GM10248 (cell line): ENCODE measurements at regions of chr6 and their contacts with region 1.

Region 1: DNA sequence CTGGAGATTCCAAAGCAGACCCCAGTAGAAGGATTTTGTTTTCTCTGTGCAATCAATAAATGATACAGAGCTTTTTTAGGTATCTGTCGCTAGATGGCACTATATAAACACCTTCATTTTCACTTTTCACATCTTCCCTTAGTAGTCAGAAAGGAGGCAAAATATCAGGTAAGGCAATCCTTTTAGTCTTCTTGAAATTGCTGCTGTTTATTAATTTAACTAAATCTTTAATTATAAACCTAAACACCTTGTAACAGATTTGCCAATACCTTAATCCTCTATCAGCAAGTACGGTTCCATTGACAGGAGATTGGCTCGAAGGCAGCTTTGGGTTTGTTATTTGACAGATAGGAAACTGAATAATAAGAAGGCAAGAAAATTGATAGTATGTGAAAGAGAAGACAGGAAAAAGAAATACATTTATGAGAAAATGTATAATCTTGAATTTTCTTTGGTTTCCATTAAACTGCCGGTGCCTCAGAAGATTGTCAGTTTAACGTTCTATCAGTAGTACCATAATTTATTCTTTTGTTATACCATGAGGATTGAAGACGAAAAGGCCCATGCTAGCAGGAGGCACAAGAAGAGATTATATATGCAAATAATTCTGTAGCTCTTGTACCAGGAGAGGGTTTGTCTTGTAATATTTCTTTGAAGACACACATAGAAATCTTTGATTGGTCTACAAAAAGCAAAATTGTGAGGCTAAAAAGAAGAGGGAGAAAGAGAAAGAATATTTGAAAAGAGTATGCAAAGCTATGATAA is 23.5 kb upstream of the IBTK start:
- DNase-seq: peak; percentile 52
- CTCF ChIP-seq: peak; percentile 45

Region 2: GRCh38 chr6:81925201-81925600 is 345.9 kb before region 1 on chr6:
- CTCF ChIA-PET with region 1: no interaction called
- POLR2A ChIA-PET with region 1: no interaction called
- DNase-seq: no peak
- CTCF ChIP-seq: no peak

Region 3: DNA sequence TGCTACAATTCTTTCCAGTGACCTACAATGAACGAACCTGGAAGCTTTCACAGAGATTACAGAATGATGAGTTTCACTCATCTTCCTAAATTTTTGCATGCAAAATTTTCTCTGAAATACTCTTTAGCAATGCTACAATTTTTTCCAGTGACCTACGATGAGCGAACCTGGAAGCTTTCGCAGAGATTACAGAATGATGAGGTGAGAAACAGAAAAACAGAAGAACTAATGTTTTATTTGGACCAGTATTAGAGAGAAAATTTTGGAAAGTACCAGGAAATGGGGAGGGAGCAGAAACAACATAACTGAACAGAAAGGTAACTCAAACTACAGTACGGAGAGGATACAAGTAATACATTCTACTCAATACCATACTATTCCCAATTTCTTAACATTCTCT is 98.5 kb before region 1 on chr6:
- CTCF ChIA-PET with region 1: no interaction called
- POLR2A ChIA-PET with region 1: no interaction called
- DNase-seq: no peak
- CTCF ChIP-seq: no peak

Region 4: GRCh38 chr6:82247634-82248232 is 23.3 kb before region 1 on chr6 and contains the start of gene IBTK:
- CTCF ChIA-PET with region 1: interaction called, 12 read pairs
- POLR2A ChIA-PET with region 1: no interaction called
- DNase-seq: peak; percentile 94
- CTCF ChIP-seq: no peak

Region 5: GRCh38 chr6:82257088-82257772 is 13.8 kb before region 1 on chr6:
- CTCF ChIA-PET with region 1: interaction called, 41 read pairs
- POLR2A ChIA-PET with region 1: no interaction called
- DNase-seq: no peak
- CTCF ChIP-seq: no peak

Region 6: DNA sequence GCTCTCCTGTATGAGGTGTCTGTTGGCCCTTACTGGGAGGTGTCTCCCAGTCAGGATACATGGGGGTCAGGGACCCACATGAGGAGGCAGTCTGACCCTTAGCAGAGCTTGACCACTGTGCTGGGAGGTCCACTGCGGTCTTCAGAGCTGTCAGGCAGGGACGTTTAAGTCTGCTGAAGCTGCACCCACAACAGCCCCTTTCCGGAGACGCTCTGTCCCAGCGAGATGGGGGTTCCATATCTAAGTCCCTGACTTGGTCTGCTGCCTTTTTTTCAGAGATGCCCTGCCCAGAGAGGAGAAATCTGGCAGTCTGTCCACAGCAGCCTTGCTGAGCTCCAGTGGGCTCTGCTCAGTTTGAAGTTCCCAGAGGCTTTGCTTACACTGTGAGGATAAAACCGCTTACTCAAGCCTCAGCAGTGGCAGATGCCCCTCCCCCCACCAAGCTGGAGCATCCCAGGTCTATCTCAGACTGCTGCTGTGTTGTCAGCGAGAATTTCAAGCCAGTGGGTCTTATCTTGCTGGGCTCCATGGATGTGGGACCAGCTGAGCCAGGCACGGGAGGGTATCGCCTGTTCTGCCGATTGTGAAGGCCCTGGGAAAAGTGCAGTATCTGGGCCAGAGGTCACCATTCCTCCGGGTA is 12.8 kb after region 1 on chr6:
- CTCF ChIA-PET with region 1: interaction called, 14 read pairs
- POLR2A ChIA-PET with region 1: no interaction called
- DNase-seq: no peak
- CTCF ChIP-seq: no peak

Region 7: GRCh38 chr6:82371799-82372546 is 100.9 kb after region 1 on chr6:
- CTCF ChIA-PET with region 1: no interaction called
- POLR2A ChIA-PET with region 1: no interaction called
- DNase-seq: no peak
- CTCF ChIP-seq: no peak

Region 8: GRCh38 chr6:82712852-82713251 is 441.8 kb after region 1 on chr6:
- CTCF ChIA-PET with region 1: interaction called, 37 read pairs
- POLR2A ChIA-PET with region 1: no interaction called
- DNase-seq: peak; percentile 24
- CTCF ChIP-seq: peak; percentile 25

Region 9: DNA sequence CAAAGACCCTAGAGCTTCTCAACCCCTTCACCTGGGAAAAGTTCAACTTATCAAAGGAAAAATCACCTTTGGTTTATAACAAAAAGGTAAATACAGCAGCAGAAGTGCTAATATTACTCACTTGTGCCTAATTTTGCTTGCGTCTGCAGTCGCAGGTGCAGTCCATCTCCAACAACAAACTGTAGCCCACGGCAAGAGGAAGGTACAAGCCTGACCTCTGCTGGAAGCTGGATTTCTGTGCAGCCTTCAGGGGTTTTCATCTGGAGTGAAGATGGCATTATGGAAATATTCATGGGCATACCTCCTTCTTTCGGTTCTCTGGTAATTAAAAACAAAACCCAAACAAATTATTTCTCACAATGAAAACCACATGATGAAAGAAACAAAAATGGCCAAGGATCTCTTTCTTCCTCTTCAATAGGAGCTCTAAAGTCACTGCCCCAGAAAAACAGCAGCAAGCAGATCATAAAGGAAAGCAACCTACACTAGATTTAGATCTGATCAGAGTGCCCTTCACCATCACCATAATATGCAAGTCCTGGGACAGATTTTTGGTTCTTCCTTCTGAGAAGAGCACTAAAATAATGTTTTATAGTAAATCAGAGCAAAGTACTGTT is 786.8 kb after region 1 on chr6:
- CTCF ChIA-PET with region 1: interaction called, 39 read pairs
- POLR2A ChIA-PET with region 1: no interaction called
- DNase-seq: peak; percentile 28
- CTCF ChIP-seq: peak; percentile 63